ENCODE measurements at regions of chr5 and their contacts with region 1.

Region 1: DNA sequence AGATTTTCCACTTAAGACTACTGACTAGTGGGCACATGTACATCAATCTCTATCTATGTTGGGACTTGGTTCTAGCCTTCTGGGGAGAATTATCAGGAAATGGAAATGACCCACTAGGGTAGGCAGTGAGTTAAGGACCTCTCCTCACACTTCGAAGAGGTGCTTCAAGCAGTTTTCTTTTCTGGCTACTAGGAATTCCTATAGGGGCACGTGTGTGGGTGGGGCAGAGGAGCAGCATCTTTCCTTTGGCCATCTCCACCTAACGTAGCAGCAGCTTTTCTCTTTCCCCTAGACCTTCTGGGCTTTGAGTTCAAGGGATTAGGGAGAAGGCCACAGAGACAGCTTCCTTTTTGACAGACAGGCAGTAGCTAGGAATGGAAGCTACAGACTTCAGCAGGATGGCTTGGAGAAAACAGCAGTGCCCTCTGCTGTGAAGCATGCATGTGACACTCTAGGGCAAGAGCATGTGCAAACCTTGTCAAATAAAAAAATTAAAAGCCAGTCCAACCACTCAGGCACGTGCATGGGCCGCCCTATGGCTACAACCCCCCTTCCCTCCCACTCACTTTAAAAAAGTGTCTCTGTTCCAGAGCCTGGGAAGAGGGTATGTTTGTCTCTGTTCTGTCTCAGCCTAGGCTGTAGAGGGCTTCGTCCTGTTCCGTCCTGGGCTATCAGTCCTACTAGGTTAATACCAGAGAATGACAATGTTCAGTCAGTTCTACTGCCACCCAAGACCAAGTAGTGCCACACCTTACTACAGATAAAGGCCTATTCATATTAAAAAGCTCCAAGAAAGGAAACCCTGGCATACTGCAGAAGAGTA is 8.7 kb upstream of the GFRA3 start:
- DNase-seq: peak; percentile 23
- ATAC-seq: peak; percentile 66
- H3K4me3 Mint-ChIP-seq: no peak overlapping the region
- H3K27ac Mint-ChIP-seq: no peak overlapping the region
- H3K4me1 Mint-ChIP-seq: no peaks in the 10 kb centered on the region
- H3K27me3 Mint-ChIP-seq: no peaks in the 10 kb centered on the region

Region 2: DNA sequence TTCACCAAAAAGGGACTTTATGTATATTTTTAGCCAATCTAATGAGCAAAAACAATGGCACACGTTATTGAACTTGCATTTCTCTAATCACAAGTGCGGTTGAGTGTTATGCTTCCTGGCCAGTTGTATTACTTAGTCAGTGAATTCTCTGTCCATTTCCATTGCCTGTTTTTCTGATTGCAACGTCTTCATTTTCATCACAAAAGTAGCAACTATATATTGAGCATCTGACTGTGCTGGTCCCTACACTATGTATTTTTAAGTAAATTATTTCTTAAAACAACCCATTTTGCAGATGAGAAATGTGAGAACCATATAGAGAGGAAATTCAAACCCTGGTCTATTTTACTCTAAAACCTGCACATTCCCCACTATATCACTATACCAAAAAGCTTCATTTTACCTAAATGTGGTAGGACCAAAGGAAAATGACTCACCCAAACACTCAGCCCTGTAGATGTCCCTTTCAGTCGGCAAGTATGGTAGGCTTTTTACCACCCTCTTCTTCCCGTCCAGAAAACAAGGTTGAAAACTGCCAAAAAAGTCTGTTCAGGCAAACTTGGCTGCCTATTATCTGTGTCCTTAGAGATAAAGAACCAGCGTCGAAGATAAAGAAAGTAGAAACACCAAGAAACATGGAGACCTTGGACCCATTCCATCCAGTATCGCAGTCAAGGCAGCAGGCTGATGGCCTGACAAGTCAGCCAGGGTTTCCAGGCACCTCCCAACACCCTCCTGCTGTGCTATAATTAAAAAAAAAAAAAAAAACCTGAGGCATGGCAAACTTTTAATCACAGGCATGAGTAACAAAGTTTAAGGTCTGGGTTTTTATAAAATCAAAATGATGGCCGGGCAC is 231.5 kb before region 1 on chr5:
- CTCF ChIA-PET with region 1: no interaction called
- POLR2A ChIA-PET with region 1: interaction called, 17 read pairs
- intact Hi-C with region 1: no loop called
- DNase-seq: no peak
- ATAC-seq: no peak
- H3K4me3 Mint-ChIP-seq: no peak overlapping the region
- H3K27ac Mint-ChIP-seq: no peak overlapping the region
- H3K4me1 Mint-ChIP-seq: peaks cover 10% of the 10 kb centered on the region
- H3K27me3 Mint-ChIP-seq: peaks cover 6% of the 10 kb centered on the region

Region 3: GRCh38 chr5:138536665-138537315 is 253.7 kb after region 1 on chr5:
- CTCF ChIA-PET with region 1: no interaction called
- POLR2A ChIA-PET with region 1: no interaction called
- intact Hi-C with region 1: no loop called
- DNase-seq: peak; percentile 35
- ATAC-seq: peak; percentile 89
- H3K4me3 Mint-ChIP-seq: no peak overlapping the region
- H3K27ac Mint-ChIP-seq: peak overlapping the region; percentile 70
- H3K4me1 Mint-ChIP-seq: peaks cover 74% of the 10 kb centered on the region
- H3K27me3 Mint-ChIP-seq: no peaks in the 10 kb centered on the region

Measured in activated CD4-positive, alpha-beta T cell treated with anti-CD3 and anti-CD28 coated beads for 36 hours (primary cell).